Left colon (tissue), 2 donors: ENCODE measurements at regions of chr1 and their contacts with region 1.

Region 1: GRCh38 chr1:230753586-230754251 is 6.5 kb downstream of the CAPN9 start:
- DNase-seq: peak; percentile 78 to 83
- ATAC-seq: peak; percentile 70

Region 2: DNA sequence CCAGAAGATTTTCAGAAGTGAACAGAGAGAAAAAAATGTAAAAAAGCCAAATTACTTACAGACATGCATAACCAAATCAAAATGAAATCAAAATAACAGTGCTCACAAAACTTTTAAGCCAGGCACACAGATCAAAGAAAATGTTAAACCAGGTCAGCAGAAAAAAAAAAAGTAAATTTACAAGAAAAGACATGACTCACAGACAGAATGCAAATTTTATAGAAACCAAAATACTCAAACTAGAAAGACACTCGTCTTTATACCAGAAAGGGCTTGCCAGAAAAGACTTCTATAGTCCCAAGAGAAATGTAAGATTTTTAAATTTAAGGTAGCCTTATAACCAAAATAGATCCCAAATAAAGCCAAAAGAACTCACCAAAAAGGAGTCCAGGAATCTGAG is 197.9 kb before region 1 on chr1:
- intact Hi-C with region 1: no loop called
- DNase-seq: no peak
- ATAC-seq: no peak

Region 3: DNA sequence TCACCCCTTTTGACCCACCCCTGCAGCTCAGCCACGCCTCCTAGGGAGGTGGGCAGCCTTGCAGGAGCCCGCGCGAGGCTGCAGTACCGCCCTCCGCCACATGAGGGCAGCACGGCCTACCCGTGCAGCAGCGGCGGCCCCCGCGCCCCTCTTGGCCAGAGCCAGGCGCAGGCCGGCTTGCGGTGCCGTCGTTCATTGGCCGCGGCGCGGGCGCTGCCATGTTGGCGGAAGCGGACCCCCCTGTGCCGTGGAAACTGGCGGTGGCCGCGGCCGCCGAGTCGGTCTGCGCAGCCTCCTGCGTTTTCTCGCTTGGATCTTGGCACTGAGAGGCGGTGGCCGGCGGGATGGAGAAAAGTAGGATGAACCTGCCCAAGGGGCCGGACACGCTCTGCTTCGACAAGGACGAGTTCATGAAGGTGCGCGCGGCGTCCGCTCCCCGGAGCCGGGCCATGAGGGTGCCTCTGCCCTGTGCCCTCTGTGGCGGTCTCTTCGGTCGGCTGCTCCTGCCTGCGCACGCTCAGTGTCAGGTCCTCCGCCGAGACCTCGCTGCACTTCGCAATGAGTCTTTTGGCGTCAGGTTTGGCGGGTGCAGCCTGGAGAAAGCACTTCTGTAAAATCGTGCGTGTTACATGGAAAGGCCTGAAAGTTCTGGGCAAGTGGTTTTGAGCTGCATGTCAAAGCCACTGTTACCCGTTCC is 111.3 kb before region 1 on chr1 and contains the start of gene COG2:
- intact Hi-C with region 1: loop called in 1 of 2 experiments (anchors 10 kb)
- DNase-seq: peak; percentile 91 to 97
- ATAC-seq: peak; percentile 95
- total RNA-seq, gene COG2: 45.3 to 53.5 TPM